Mammary epithelial cell (primary cell): ENCODE measurements at regions of chr9 and their contacts with region 1.

Region 1: GRCh38 chr9:107613321-107613720 is 123.8 kb upstream of the KLF4 start:
- DNase-seq: no peak
- H3K4me3 ChIP-seq: no peak overlapping the region
- H3K27ac ChIP-seq: no peak overlapping the region
- H3K4me1 ChIP-seq: no peaks in the 10 kb centered on the region
- H3K27me3 ChIP-seq: peaks cover 1% of the 10 kb centered on the region
- CTCF ChIP-seq: no peak

Region 2: GRCh38 chr9:107569171-107569570 is 44.1 kb before region 1 on chr9:
- CTCF ChIA-PET with region 1: interaction called, 21 read pairs
- dilution Hi-C with region 1: no loop called
- in situ Hi-C with region 1: no loop called
- intact Hi-C with region 1: no loop called
- DNase-seq: no peak
- H3K4me3 ChIP-seq: no peak overlapping the region
- H3K27ac ChIP-seq: no peak overlapping the region
- H3K4me1 ChIP-seq: no peaks in the 10 kb centered on the region
- H3K27me3 ChIP-seq: no peaks in the 10 kb centered on the region
- CTCF ChIP-seq: no peak

Region 3: GRCh38 chr9:107650321-107650720 is 37.0 kb after region 1 on chr9:
- CTCF ChIA-PET with region 1: no interaction called
- dilution Hi-C with region 1: no loop called
- in situ Hi-C with region 1: no loop called
- intact Hi-C with region 1: no loop called
- DNase-seq: no peak
- H3K4me3 ChIP-seq: no peak overlapping the region
- H3K27ac ChIP-seq: no peak overlapping the region
- H3K4me1 ChIP-seq: no peaks in the 10 kb centered on the region
- H3K27me3 ChIP-seq: no peaks in the 10 kb centered on the region
- CTCF ChIP-seq: no peak

Region 4: GRCh38 chr9:107732781-107733522 is 119.6 kb after region 1 on chr9:
- CTCF ChIA-PET with region 1: no interaction called
- dilution Hi-C with region 1: no loop called
- in situ Hi-C with region 1: no loop called
- intact Hi-C with region 1: no loop called
- DNase-seq: peak; percentile 79
- H3K4me3 ChIP-seq: no peak overlapping the region
- H3K27ac ChIP-seq: no peak overlapping the region
- H3K4me1 ChIP-seq: peaks cover 32% of the 10 kb centered on the region
- H3K27me3 ChIP-seq: no peaks in the 10 kb centered on the region
- CTCF ChIP-seq: no peak